Left colon (tissue), 2 donors: ENCODE measurements at regions of chr10 and their contacts with region 1.

Region 1: DNA sequence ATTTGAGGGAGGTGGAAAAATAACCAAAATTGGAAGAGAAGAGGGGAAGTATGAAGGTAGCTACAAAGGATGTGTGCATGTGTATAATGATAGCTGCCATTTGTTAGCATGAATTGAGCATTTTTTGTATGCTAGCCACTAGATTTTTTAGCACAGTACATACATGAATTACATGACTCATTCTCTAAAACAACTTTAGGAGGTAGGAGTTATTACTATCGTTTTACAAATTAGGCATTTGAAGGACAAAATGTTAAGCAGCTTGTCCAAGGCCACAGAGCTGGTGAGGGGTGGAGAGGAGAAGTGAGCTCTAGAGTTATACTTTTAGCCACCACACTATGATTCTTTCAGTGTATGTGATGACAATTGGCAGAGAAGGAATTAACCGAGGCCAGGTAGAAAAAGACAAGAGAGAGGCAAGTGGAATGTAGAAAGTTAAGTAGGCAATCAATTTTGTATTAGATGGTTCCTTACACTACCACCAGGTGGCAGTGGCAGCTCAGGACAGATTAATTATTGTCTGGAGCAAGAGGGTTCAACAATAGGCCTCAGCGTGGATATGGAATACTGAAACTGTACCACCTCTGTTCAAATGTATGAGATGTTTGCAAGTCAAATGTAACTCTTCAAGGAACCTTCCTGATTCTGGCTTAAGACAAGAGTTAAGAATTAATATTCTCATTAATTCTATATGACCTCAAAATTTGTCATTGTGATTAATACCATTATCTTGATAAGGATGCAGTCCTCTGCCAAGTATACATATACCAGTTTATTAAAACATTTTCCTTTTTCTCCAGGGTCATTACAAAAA is 128.0 kb downstream of the MBL2 start:
- DNase-seq: peak in 1 of 2 donors; percentile 38
- ATAC-seq: peak; percentile 63

Region 2: GRCh38 chr10:52729271-52730104 is 84.9 kb after region 1 on chr10:
- intact Hi-C with region 1: loop called in 1 of 2 experiments (anchors 5 kb)
- DNase-seq: no peak
- ATAC-seq: peak; percentile 46